K562 (cell line): ENCODE measurements at regions of chr12 and their contacts with region 1.

Region 1: DNA sequence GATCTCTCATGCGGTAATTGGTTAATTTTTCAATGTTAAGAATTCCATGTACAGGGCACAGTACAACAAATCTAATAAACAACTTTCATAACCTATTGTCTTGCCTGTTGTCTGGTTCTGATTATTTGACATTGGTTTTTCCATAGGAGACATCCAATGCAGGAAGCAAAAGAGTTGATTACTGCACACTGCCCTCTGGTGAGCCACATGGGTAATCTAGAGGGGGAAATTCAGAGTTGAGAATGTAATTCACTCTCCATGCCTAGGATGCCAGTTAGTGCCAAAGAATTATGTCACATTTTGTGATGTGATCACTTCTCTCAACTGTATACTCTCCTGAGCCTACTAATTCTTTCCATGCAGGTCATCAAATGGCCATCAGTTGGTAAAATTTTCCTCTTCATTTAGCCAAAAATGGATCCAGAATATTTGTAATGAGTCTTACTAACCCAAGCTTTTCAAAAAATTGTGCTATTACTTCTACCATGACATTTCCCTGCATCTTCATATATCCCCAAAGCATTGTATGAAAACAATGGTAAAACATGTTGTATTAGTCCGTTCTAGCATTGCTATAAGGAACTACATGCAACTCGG is 17.7 kb upstream of the CCDC91 start:
- DNase-seq: peak; percentile 24 to 69 (median 46)
- ATAC-seq: peak; percentile 90
- H3K4me3 ChIP-seq: no peak overlapping the region
- H3K27ac ChIP-seq: no peak overlapping the region
- H3K4me1 ChIP-seq: no peaks in the 10 kb centered on the region
- H3K27me3 ChIP-seq: no peaks in the 10 kb centered on the region
- CTCF ChIP-seq: peak; percentile 70 to 80 (median 73)
- EP300 ChIP-seq: no peak; the same call in 1 of the 2 replicates
- POLR2A ChIP-seq: no peak
- RAD21 ChIP-seq: peak; percentile 90 to 94

Region 2: DNA sequence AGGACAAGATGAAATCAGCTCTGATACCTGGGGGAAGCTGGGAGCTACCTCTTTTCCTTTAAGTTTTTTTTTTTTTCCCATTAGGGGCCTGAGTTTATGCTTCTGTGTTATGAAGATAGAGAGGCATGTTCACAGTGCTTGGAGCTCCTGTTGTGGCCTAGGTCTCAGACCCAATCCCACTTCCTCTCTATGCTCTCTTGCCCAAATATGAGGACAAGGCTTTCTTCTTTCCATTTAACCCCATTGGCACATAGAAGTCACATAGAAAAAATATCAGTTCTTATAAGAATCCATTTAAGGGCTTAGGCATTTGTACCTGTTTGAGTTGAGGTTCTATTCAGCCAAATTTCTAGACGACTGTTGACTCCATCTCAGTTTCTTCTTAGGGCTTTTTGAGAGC is 449.3 kb before region 1 on chr12:
- CTCF ChIA-PET with region 1: no interaction called
- POLR2A ChIA-PET with region 1: no interaction called
- in situ Hi-C with region 1: loop called (anchors 10 kb)
- intact Hi-C with region 1: no loop called
- DNase-seq: no peak
- ATAC-seq: no peak
- H3K4me3 ChIP-seq: no peak overlapping the region
- H3K27ac ChIP-seq: no peak overlapping the region
- H3K4me1 ChIP-seq: no peaks in the 10 kb centered on the region
- H3K27me3 ChIP-seq: no peaks in the 10 kb centered on the region
- CTCF ChIP-seq: no peak
- EP300 ChIP-seq: no peak
- POLR2A ChIP-seq: no peak
- RAD21 ChIP-seq: no peak

Region 3: DNA sequence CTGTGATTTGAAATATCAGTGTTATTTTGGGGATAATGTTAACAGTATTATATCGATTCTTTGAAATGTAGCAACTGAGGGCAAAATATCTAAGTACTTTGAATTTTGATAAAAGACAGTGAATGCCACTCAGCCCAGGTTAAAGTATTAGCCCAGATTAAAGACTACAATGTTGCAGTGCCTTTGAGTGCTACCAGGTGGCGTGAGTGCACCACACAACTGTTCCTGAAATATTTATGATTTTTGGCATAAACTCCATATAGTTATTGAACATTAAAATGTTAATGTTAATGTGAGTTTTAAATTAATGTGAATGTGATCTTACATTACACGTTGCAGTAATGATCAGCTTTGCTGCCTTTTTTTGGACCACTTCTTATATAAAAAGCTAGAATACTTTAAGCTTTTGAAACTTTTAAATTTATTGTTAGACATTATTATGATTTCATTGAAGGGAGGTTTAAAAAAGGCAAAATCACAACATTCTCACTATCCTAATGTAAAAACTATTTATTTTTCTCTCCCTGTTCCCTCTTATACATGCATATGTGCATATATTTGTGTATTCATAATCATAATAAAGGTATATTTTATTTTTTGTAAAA is 439.4 kb before region 1 on chr12:
- CTCF ChIA-PET with region 1: interaction called, 4 read pairs
- POLR2A ChIA-PET with region 1: no interaction called
- in situ Hi-C with region 1: loop called (anchors 10 kb)
- intact Hi-C with region 1: loop called (anchors 10 kb)
- DNase-seq: peak; percentile 37 to 49 (median 40)
- ATAC-seq: peak; percentile 77
- H3K4me3 ChIP-seq: no peak overlapping the region
- H3K27ac ChIP-seq: no peak overlapping the region
- H3K4me1 ChIP-seq: no peaks in the 10 kb centered on the region
- H3K27me3 ChIP-seq: no peaks in the 10 kb centered on the region
- CTCF ChIP-seq: peak; percentile 75 to 89 (median 80)
- EP300 ChIP-seq: no peak
- POLR2A ChIP-seq: no peak
- RAD21 ChIP-seq: peak; percentile 91 to 93

Region 4: DNA sequence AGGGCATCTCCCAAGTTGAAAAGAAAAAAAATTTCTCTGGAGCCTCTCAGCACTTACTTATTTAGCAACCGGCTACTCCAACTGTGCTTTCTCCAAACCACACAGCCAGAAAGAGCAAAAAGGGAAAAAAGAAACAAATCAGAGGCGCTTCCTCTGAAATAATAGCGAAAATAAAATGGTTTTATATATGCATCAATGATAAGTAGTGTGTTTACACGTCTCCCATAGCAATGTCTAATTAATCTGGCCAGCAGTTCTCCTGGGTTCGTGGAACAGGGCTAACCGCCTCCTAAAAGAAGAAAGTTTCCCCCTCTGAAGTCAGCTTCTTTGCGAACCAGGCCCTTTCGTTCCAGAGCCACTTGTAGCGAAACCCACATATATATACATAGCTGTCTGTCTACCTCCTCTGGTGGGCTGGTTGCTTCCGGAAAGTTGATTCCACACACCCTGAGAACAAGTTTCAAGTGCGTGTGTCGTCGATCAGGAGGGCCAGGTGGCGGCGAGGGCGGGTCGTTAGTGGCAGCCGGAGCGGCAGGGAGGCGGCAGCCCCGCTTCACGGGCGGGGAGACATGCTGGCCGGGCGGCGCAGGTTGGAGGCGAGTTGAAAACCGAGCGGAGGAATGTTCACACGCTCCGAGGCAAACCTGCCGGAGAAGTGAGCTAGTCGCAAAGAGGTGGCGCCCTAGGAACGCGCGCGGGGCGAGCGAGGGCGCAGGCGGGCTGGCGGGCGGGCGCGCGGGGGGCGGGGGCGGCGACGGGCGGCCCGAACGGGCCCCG is 202.7 kb before region 1 on chr12:
- CTCF ChIA-PET with region 1: interaction called, 3 read pairs
- POLR2A ChIA-PET with region 1: no interaction called
- in situ Hi-C with region 1: loop called (anchors 10 kb)
- intact Hi-C with region 1: no loop called
- DNase-seq: peak; percentile 48 to 85 (median 56)
- ATAC-seq: peak; percentile 93
- H3K4me3 ChIP-seq: peak overlapping the region; percentile 50
- H3K27ac ChIP-seq: peak overlapping the region; percentile 59; the same call in 2 of the 3 replicates
- H3K4me1 ChIP-seq: peaks cover 2 to 19% of the 10 kb centered on the region in 2 experiments; a peak in 3 of 5 replicates
- H3K27me3 ChIP-seq: peaks cover 0 to 7% of the 10 kb centered on the region in 2 experiments; a peak in 1 of 5 replicates
- CTCF ChIP-seq: peak; percentile 20 to 57 (median 46); a peak in 4 of 6 replicates
- EP300 ChIP-seq: no peak
- POLR2A ChIP-seq: no peak; the same call in 1 of the 2 replicates
- RAD21 ChIP-seq: peak; percentile 49 to 64; a peak in 3 of 4 replicates

Region 5: GRCh38 chr12:28110329-28110728 is 62.2 kb before region 1 on chr12:
- CTCF ChIA-PET with region 1: no interaction called
- POLR2A ChIA-PET with region 1: no interaction called
- in situ Hi-C with region 1: no loop called
- intact Hi-C with region 1: loop called (anchors 1 kb)
- DNase-seq: peak in 2 of 4 experiments; percentile 45 to 65
- ATAC-seq: peak; percentile 96
- H3K4me3 ChIP-seq: no peak overlapping the region
- H3K27ac ChIP-seq: peak overlapping the region; percentile 67
- H3K4me1 ChIP-seq: peaks cover 0 to 6% of the 10 kb centered on the region in 2 experiments; a peak in 2 of 5 replicates
- H3K27me3 ChIP-seq: no peaks in the 10 kb centered on the region
- CTCF ChIP-seq: peak; percentile 28 to 45 (median 34); a peak in 3 of 6 replicates
- EP300 ChIP-seq: no peak
- POLR2A ChIP-seq: no peak
- RAD21 ChIP-seq: peak; percentile 43 to 68

Region 6: DNA sequence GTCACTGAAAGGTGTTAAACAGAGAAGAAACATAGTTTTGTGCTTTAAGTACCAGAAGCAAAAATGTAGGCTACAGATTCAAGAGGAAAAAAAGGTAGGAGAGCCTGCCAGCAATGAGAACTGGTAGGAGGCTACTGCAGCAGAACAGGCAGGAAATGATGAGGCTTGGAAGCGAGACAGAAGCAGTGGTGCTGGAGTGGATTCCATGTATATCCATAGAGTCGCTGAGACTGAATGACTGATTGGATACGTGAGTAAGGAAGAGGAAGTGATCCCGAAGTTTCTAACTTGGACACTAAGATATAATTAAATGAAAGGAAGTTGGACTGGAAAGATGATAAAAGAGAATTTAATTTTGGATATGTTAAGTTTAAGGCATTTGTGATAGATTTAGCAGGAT is 27.3 kb before region 1 on chr12:
- CTCF ChIA-PET with region 1: no interaction called
- POLR2A ChIA-PET with region 1: no interaction called
- in situ Hi-C with region 1: no loop called
- intact Hi-C with region 1: no loop called
- DNase-seq: no peak
- ATAC-seq: no peak
- H3K4me3 ChIP-seq: no peak overlapping the region
- H3K27ac ChIP-seq: 0 out of 3 replicates have a peak overlapping the region, but pooled peaks have one; percentile 3
- H3K4me1 ChIP-seq: peaks cover 5 to 29% of the 10 kb centered on the region in 2 experiments; a peak in 4 of 5 replicates
- H3K27me3 ChIP-seq: no peaks in the 10 kb centered on the region
- CTCF ChIP-seq: no peak
- EP300 ChIP-seq: no peak
- POLR2A ChIP-seq: no peak
- RAD21 ChIP-seq: no peak

Region 7: DNA sequence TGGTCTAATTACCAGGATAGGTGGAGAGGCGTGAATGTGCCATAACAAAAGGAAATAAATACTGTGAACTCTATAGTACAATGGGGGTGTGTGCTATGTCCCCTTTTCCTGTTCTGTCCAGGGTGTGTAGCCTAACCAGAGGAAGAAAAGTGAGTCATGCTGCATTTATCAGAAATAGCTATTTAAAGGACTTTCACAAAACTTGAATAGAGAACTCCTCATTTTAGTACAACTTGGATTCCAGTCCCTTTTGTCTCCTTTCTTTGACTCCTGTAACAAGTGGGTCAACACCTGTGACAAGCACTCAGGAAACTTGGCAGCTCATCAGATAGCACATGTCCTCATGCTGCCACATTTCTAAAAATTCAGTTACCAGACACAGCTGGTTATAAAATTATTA is 141.1 kb after region 1 on chr12:
- CTCF ChIA-PET with region 1: no interaction called
- POLR2A ChIA-PET with region 1: no interaction called
- in situ Hi-C with region 1: no loop called
- intact Hi-C with region 1: no loop called
- DNase-seq: peak in 2 of 4 experiments; percentile 11 to 21
- ATAC-seq: peak; percentile 35; the same call in 1 of the 3 replicates
- H3K4me3 ChIP-seq: no peak overlapping the region
- H3K27ac ChIP-seq: peak overlapping the region; percentile 14; the same call in 1 of the 3 replicates
- H3K4me1 ChIP-seq: peaks cover 0 to 2% of the 10 kb centered on the region in 2 experiments; a peak in 1 of 5 replicates
- H3K27me3 ChIP-seq: no peaks in the 10 kb centered on the region
- CTCF ChIP-seq: no peak
- EP300 ChIP-seq: no peak
- POLR2A ChIP-seq: no peak
- RAD21 ChIP-seq: no peak

Region 8: GRCh38 chr12:28872654-28873268 is 700.2 kb after region 1 on chr12:
- CTCF ChIA-PET with region 1: no interaction called
- POLR2A ChIA-PET with region 1: no interaction called
- in situ Hi-C with region 1: no loop called
- intact Hi-C with region 1: loop called (anchors 5 kb)
- DNase-seq: peak; percentile 37 to 67 (median 48)
- ATAC-seq: peak; percentile 81
- H3K4me3 ChIP-seq: no peak overlapping the region
- H3K27ac ChIP-seq: no peak overlapping the region
- H3K4me1 ChIP-seq: no peaks in the 10 kb centered on the region
- H3K27me3 ChIP-seq: no peaks in the 10 kb centered on the region
- CTCF ChIP-seq: peak; percentile 59 to 76 (median 74)
- EP300 ChIP-seq: no peak
- POLR2A ChIP-seq: no peak
- RAD21 ChIP-seq: peak; percentile 60 to 79